Caco-2 (cell line): ENCODE measurements at regions of chr7 and their contacts with region 1.

Region 1: DNA sequence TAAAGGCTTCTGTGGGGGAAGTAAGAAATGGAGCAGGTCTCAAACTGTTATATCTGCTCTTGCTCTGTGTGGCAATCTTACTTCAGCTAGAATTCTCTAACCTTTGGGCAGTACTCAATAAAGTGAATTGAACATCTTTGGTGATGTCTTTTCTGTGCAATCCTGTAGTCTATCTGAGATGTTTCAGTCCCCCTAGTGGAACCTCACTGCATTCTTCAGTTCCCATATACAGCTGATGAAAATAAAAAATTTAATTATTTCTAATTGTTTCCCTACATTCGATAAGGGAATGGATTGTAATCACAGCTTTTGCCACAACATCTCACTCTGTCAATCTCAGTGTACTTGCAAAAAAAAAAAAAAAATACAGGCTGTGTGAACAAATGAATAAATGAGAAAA is 522.6 kb downstream of the DNAJB9 start:
- DNase-seq: no peak
- H3K4me3 ChIP-seq: no peak overlapping the region
- H3K4me3 Mint-ChIP-seq: no peak overlapping the region
- H3K27ac Mint-ChIP-seq: no peak overlapping the region
- H3K4me1 ChIP-seq: no peaks in the 10 kb centered on the region
- H3K4me1 Mint-ChIP-seq: no peaks in the 10 kb centered on the region
- H3K27me3 ChIP-seq: no peaks in the 10 kb centered on the region
- H3K27me3 Mint-ChIP-seq: no peaks in the 10 kb centered on the region
- CTCF ChIP-seq: peak in 1 of 2 experiments; percentile 9

Region 2: DNA sequence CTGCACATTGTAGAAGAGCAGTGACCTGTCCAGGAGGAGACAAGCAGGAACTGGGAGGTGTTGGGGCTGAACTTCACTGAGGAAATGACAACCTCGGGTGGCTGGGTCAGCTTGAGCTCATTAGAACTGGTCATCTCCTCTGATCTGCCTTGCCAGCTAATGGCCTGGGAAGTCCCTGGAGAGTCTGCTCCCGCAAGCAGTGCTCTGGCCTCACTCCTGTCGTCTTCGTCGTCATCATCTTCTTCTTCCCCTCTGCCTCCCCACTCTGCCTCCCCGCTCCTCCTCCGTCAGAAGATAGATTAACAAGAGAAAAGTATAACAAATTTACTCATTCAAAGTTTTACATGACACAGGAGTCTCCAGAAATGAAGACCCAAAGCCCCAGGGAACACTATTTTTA is 97.4 kb before region 1 on chr7:
- CTCF ChIA-PET with region 1: no interaction called
- POLR2A ChIA-PET with region 1: no interaction called
- intact Hi-C with region 1: loop called (anchors 5 kb)
- DNase-seq: no peak
- H3K4me3 ChIP-seq: no peak overlapping the region
- H3K4me3 Mint-ChIP-seq: no peak overlapping the region
- H3K27ac Mint-ChIP-seq: no peak overlapping the region
- H3K4me1 ChIP-seq: peaks cover 33% of the 10 kb centered on the region
- H3K4me1 Mint-ChIP-seq: peaks cover 48% of the 10 kb centered on the region
- H3K27me3 ChIP-seq: no peaks in the 10 kb centered on the region
- H3K27me3 Mint-ChIP-seq: no peaks in the 10 kb centered on the region
- CTCF ChIP-seq: no peak

Region 3: DNA sequence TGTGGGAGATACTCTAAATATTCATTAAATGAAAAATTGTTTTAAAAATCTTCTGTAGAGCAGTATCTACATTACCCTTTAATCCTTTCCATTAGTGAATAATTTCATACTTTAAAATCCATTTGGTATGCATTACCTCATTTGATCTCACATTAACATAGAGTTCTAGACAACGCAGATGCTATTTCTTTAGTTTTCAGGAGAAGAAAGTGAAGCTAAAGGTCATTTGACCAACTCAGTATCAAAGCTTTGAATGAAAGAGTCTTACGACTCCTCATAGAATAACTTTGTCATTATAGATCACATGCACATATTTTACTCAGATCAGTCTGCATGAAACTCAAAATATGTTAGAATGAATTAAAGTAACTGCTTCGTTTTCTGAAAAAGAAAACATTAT is 62.4 kb before region 1 on chr7:
- CTCF ChIA-PET with region 1: no interaction called
- POLR2A ChIA-PET with region 1: no interaction called
- intact Hi-C with region 1: loop called (anchors 5 kb)
- DNase-seq: no peak
- H3K4me3 ChIP-seq: no peak overlapping the region
- H3K4me3 Mint-ChIP-seq: no peak overlapping the region
- H3K27ac Mint-ChIP-seq: no peak overlapping the region
- H3K4me1 ChIP-seq: no peaks in the 10 kb centered on the region
- H3K4me1 Mint-ChIP-seq: no peaks in the 10 kb centered on the region
- H3K27me3 ChIP-seq: no peaks in the 10 kb centered on the region
- H3K27me3 Mint-ChIP-seq: no peaks in the 10 kb centered on the region
- CTCF ChIP-seq: no peak